ENCODE measurements at regions of chr3 and their contacts with region 1.

Region 1: GRCh38 chr3:9067352-9067975 is 104.2 kb upstream of the RAD18 start:
- DNase-seq: peak in 1 of 2 donors; percentile 45
- ATAC-seq: peak; percentile 82

Region 2: DNA sequence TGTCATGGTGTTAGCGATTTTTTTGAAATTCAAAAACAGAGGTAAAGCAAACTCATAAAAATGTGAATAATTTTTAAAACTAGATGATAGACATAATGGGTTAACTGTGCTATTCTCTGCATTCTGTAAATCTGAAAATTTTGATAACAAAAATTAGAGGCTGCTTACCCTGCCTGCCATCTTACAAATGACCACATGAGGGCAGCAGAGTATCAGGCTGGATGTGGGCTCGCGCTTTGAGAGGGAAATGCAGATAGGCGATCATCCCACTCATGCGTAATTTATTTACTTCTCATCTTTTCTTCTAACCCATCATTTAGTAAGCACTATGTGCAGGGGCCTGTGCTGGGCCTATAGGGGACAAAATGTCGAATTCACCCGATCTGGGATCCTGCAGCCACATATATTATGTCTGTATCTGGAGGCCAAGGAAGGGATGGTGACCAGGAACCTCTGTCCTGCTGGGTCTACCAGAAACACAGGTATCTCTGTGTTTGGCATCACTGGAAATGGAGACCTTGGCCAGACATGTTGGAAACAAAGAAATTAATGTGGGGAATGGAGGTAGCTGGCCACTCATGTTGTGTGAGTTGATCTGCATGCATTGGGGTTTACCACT is 96.4 kb before region 1 on chr3:
- intact Hi-C with region 1: loop called in 1 of 2 experiments (anchors 5 kb)
- DNase-seq: peak in 1 of 2 donors; percentile 66
- ATAC-seq: peak; percentile 53

Region 3: DNA sequence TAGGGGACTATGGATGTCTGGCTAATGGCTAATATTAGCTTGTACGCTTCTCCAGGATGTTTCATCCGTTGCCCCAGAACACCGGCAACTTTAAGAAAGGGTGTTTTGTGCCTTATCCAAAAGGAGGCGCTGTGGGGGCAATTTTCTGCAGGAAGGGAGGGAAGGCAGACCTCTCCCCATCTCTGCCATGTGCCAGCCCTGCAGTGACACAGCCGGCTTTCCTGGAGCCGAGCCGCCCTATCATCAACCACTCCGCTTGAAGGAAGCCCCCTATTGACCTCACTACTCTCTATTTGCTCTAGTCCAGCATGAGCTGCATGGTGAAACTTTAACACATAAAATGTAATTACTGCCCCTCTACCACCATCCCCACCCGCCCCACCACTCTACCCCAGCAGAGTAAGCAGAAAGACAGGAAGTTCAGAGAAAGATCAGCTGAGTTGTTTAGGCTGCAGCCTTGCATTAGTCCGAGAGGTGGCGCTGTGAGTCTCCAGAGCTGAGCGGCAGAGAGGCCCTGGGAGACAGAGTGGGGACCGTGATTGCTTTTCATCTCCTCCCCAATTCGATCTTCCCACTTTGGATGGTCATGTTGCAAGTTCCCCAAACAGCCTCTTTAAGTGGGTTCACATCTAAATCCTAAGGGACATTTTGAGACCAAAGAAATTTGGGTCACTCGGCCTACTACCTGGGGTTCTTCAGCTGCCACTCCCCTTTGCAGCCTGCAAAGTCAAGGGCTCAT is 79.7 kb before region 1 on chr3:
- intact Hi-C with region 1: loop called in 1 of 2 experiments (anchors 5 kb)
- DNase-seq: peak in 1 of 2 donors; percentile 70
- ATAC-seq: peak; percentile 65

Measured in left colon (tissue), 2 donors.